Heart right ventricle (tissue), 16 donors: ENCODE measurements at regions of chr13 and their contacts with region 1.

Region 1: GRCh38 chr13:80141123-80141849 is 199.6 kb downstream of the SPRY2 start:
- DNase-seq: peak; percentile 40 to 76
- ATAC-seq: peak; percentile 91 to 98 (median 95)
- H3K4me3 ChIP-seq: peak overlapping the region in 4 of 10 donors; percentile 1 to 34 (median 10)
- H3K27ac ChIP-seq: peak overlapping the region in 9 of 10 donors; percentile 21 to 78 (median 68)
- H3K4me1 ChIP-seq: peaks cover 0 to 54% (median 22%) of the 10 kb centered on the region in 9 donors
- H3K27me3 ChIP-seq: no peaks in the 10 kb centered on the region
- CTCF ChIP-seq: no peak

Region 2: GRCh38 chr13:79417741-79418140 is 723.5 kb before region 1 on chr13:
- intact Hi-C with region 1: loop called in 1 of 10 experiments (anchors 5 kb)
- DNase-seq: no peak
- ATAC-seq: no peak
- H3K4me3 ChIP-seq: no peak overlapping the region
- H3K27ac ChIP-seq: no peak overlapping the region
- H3K4me1 ChIP-seq: no peaks in the 10 kb centered on the region
- H3K27me3 ChIP-seq: no peaks in the 10 kb centered on the region
- CTCF ChIP-seq: no peak

Region 3: DNA sequence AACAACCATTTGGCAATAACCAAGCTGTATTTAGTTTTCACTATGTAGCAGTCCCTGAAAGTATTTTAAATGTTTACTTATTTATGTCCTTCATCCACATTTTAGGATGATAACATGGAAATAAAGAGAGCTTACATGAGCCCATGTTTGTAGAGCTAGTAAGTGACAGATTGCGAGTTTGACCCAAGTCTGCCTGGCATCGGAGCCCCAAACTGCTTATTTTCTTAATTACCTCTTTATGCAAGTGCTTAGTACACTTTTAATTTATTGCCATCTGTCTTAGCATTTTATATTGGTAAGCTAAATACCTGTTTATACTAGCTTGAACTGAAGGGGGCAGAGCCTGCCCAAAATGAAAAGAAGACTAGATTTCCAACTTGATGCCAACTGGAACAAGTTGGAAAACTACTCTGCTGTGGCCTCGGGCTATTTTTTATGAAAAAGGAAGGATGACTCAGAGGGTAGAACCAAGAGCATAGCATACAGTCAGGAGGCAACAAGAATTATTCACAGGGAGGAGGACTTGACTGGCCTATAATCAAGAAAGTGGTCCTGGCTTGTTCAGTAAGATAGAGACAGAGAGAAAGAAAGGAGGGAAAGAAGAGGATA is 510.1 kb before region 1 on chr13:
- intact Hi-C with region 1: loop called in 1 of 10 experiments (anchors 10 kb)
- DNase-seq: peak in 1 of 2 donors; percentile 7
- ATAC-seq: peak; percentile 60 to 93 (median 78)
- H3K4me3 ChIP-seq: no peak overlapping the region
- H3K27ac ChIP-seq: peak overlapping the region in 1 of 10 donors; percentile 35
- H3K4me1 ChIP-seq: peaks cover 0 to 6% (median 0%) of the 10 kb centered on the region in 9 donors
- H3K27me3 ChIP-seq: no peaks in the 10 kb centered on the region
- CTCF ChIP-seq: peak in 8 of 9 donors; percentile 14 to 55 (median 43)

Region 4: DNA sequence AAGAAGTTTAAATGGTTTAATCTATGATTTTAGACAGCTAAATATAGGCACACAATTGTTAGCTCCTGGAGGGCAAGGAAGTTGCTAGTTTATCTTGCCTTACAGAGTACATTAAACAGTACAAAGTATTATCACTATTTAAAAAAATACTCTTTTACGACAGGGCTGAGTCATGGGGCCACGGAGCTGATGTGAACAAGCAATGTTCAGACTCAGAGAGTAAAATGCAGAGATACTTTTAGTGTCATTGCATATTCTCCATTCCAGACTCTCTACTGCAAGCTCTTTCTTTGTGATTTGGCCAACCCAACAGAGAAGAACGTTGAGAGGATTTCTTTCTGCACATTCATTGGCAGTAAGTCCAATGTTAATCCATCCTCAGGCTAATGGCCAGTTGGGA is 152.7 kb before region 1 on chr13:
- intact Hi-C with region 1: no loop called
- DNase-seq: no peak
- ATAC-seq: no peak
- H3K4me3 ChIP-seq: no peak overlapping the region
- H3K27ac ChIP-seq: no peak overlapping the region
- H3K4me1 ChIP-seq: peaks cover 0 to 4% (median 0%) of the 10 kb centered on the region in 9 donors
- H3K27me3 ChIP-seq: no peaks in the 10 kb centered on the region
- CTCF ChIP-seq: no peak

Region 5: DNA sequence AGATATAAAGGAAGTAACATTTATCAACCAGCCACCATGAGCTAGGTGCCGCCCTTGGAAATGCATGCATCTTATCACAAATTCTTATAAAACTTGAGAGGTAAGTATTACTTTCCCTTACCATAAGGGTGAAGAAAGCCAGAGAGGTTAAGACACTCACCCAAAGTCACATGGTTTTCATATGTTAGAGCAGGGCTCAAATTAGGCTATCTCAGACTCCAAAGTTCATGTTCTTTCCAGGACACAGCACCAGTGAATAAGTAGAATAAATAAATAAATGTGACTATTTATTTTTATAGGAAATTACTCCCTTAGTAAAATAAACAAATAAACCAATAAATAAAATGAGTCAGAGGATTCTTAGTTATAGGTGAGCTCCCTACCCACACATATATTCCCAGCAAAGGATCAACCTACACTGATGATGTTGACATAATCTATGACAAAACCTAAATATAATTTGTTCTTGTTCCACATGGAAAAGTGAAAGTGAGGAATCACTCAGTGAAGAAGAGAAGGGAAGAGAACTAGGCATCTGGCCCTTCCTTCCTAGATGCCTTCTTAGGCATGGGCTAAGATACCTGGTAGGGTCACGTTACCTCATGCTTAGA is 172.5 kb after region 1 on chr13:
- intact Hi-C with region 1: loop called in 2 of 10 experiments (anchors 10 kb)
- DNase-seq: no peak
- ATAC-seq: no peak
- H3K4me3 ChIP-seq: no peak overlapping the region
- H3K27ac ChIP-seq: no peak overlapping the region
- H3K4me1 ChIP-seq: peaks cover 0 to under 1% (median 0%) of the 10 kb centered on the region in 9 donors
- H3K27me3 ChIP-seq: no peaks in the 10 kb centered on the region
- CTCF ChIP-seq: no peak

Region 6: GRCh38 chr13:80337288-80338081 is 196.2 kb after region 1 on chr13:
- intact Hi-C with region 1: loop called in 2 of 10 experiments (anchors 2 to 10 kb)
- DNase-seq: no peak
- ATAC-seq: no peak
- H3K4me3 ChIP-seq: peak overlapping the region; percentile 76 to 100 (median 86)
- H3K27ac ChIP-seq: peak overlapping the region; percentile 13 to 99 (median 98)
- H3K4me1 ChIP-seq: peaks cover 0 to 46% (median 40%) of the 10 kb centered on the region in 9 donors
- H3K27me3 ChIP-seq: no peaks in the 10 kb centered on the region
- CTCF ChIP-seq: no peak